BJ (cell line): ENCODE measurements at regions of chr1 and their contacts with region 1.

Region 1: GRCh38 chr1:145720877-145721671 is 1.8 kb downstream of the CD160 start:
- DNase-seq: no peak
- H3K4me3 ChIP-seq: peak overlapping the region; percentile 37
- H3K27me3 ChIP-seq: no peaks in the 10 kb centered on the region
- CTCF ChIP-seq: peak; percentile 94

Region 2: DNA sequence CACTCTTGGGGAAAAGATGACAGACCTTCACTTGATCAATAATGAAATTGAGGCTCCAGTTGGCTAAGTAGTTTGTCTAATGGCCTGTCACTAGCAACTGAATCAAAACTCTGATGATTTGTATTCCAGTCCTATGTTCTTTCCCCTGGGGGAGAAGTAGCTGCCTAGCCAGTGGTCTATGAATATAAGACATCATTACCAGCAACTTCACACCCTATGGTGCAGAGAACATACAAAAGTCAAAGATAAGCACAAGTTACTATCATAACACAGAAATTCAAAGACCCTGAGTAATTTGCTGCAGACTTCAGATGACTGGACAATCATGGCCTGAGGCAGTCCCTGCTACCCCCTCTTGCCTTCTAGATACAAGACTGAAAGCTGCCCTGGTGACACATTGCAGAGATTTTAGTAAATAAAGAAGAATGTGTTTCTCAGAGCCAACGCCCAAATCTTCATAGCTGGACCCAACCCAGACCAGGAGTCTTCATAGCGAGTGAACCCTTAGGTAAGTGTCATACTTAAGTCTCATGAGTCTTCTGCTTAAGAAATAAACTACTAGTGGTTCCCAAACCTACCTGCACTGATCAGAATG is 14.9 kb before region 1 on chr1:
- CTCF ChIA-PET with region 1: interaction called, 13 read pairs
- POLR2A ChIA-PET with region 1: no interaction called
- DNase-seq: peak; percentile 57
- H3K4me3 ChIP-seq: no peak overlapping the region
- H3K27me3 ChIP-seq: no peaks in the 10 kb centered on the region
- CTCF ChIP-seq: no peak

Region 3: DNA sequence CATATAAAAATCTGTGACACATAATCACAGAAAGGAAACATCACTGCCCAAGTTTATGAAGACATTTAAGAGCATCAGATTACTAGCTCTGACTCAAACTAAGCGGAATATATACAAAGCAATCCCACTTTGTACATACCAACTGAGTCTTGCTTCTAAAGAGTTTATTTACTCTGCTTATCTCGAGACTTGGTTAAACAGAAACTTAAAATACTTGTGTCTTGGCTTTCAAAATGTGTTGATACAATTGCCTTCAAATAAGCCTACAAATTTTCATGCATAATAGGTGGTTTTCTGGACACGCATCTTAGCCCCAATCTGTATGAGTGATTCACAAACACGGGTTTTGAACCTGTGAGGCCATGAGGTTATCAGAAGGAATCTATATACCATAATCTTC is 19.2 kb after region 1 on chr1:
- CTCF ChIA-PET with region 1: interaction called, 10 read pairs
- POLR2A ChIA-PET with region 1: no interaction called
- DNase-seq: peak; percentile 54
- H3K4me3 ChIP-seq: no peak overlapping the region
- H3K27me3 ChIP-seq: no peaks in the 10 kb centered on the region
- CTCF ChIP-seq: no peak